ENCODE measurements at regions of chr5 and their contacts with region 1.

Region 1: DNA sequence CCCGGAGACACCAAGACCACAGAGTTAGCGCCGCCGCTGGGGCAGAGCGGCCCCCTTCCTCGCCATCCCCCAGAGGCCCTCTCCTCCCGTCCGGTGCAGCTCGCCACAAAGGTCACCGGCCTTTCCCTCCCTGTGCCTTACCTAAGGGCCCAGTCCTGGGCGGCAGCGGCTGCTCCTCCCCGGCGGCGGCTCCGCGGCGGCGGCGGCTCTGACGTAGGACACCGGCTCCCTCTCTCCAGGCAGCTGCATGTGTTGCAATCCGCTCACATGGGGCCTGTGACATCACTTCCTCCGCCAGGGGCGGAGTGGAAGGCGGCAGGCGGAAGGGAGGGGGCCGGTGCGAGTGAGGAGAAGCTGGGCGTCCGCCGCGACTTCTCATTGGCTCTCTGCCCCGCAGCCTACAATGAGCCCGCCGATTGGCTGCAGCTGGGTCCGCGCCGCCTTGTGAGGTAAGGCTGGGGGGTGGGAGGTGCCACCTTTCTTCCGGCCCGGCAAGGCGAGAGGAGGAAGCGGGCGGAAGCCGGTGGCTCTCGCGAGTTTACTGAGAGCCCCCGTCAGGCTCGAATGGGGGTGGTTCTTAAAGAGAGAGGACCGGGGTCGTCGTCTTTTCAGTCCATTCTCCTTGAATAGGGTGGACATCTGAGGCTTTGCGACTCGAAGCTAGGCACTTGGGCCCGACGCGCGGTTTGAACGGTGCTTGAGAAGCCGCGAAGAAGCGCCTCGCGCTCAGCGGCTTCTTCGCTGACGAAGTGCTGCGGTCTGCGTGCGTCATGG is at the start of gene ETF1:
- DNase-seq: peak; percentile 97
- ATAC-seq: peak; percentile 92
- H3K4me3 Mint-ChIP-seq: peak within 1 kb of the TSS; percentile 98
- H3K27ac Mint-ChIP-seq: peak within 1 kb of the TSS; percentile 99
- H3K4me1 Mint-ChIP-seq: peaks cover 50% of the 10 kb centered on the region
- H3K27me3 Mint-ChIP-seq: no peaks in the 10 kb centered on the region
- total RNA-seq, gene ETF1: 65.2 to 68.1 TPM

Region 2: DNA sequence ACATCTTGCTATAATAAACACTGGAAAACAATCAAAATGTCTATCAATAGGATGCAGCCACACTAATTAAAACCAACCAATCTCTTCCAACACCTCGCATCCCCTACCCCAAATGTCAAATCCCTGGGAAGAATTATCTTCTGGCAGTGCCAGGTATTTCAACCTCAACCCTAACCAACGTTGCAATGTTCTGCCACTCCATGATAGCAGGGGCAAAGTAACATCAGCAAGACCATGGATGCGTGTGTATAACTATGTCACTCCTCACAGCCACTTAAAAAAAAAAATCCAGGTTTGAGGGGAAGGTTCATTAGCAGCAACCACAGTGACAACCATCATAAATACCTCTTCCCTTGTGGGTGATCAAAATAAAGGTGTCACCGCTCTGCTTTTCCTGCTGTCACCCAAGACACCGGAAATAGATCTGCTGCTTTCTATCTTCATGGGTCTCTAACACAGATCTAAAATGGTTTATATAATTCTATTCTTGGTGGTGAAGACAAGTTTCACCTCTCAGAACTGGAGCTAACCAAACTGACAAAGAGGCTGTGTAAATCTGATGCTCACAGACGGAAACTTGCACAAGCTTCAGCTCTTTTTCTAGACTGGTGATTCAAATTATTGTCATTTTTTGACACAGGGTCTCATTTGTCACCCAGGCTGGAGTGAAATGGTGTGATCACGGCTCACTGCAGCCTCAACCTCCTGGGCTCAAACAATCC is 22.1 kb after region 1 on chr5:
- POLR2A ChIA-PET with region 1: interaction called, 10 read pairs
- DNase-seq: no peak
- ATAC-seq: peak; percentile 78
- H3K4me3 Mint-ChIP-seq: peak overlapping the region; percentile 29
- H3K27ac Mint-ChIP-seq: peak overlapping the region; percentile 83
- H3K4me1 Mint-ChIP-seq: peaks cover 33% of the 10 kb centered on the region
- H3K27me3 Mint-ChIP-seq: no peaks in the 10 kb centered on the region

Region 3: GRCh38 chr5:138575194-138576015 is 32.3 kb after region 1 on chr5 and contains the start of gene HSPA9:
- POLR2A ChIA-PET with region 1: interaction called, 54 read pairs
- DNase-seq: peak; percentile 95
- ATAC-seq: peak; percentile 90
- H3K4me3 Mint-ChIP-seq: peak within 1 kb of the TSS; percentile 90
- H3K27ac Mint-ChIP-seq: peak within 1 kb of the TSS; percentile 100
- H3K4me1 Mint-ChIP-seq: peaks cover 17% of the 10 kb centered on the region
- H3K27me3 Mint-ChIP-seq: no peaks in the 10 kb centered on the region
- total RNA-seq, gene HSPA9: 168 to 183 TPM

Measured in activated naive CD8-positive, alpha-beta T cell treated with anti-CD3 and anti-CD28 coated beads, Interleukin-2, amount 10 ng/mL, durations not matched to agents 7 days and 5 days (primary cell).